ENCODE measurements at regions of chr1 and their contacts with region 1.

Region 1: GRCh38 chr1:165367375-165367993 is 11.0 kb upstream of the LMX1A start:
- DNase-seq: peak; percentile 81
- H3K4me3 Mint-ChIP-seq: no peak overlapping the region
- H3K27ac Mint-ChIP-seq: no peak overlapping the region
- H3K4me1 Mint-ChIP-seq: no peaks in the 10 kb centered on the region
- H3K27me3 Mint-ChIP-seq: peaks cover 54% of the 10 kb centered on the region

Region 2: DNA sequence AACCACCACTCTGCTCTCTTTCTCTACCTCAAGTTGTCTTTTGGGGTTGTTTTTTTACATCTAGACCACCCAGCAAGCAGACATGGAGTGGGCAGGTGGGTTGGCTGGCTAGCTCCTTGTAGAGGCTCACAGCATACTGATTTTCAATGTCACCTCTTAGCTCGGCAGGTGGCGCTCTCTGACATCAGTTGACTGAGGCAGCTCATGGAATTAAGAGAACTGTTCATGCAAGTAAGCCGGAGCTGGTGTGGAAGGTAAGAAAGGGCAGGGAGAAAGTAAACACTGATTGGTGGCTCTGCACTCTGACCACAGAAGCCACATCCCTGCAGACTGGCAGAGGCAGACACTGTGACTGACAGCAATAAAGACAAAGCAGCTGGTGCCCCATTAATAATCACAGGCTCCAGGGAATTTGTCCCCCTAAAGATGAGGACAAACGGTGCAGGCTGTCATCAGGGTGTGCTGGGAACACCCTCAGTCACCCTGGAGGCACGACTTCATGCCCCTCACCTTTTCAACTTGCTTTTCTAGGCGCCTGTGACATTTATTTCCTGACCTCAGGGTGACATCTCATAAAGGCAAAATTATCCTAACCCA is 237.8 kb before region 1 on chr1:
- CTCF ChIA-PET with region 1: interaction called, 4 read pairs
- POLR2A ChIA-PET with region 1: no interaction called
- intact Hi-C with region 1: loop called (anchors 5 kb)
- DNase-seq: peak; percentile 53
- H3K4me3 Mint-ChIP-seq: no peak overlapping the region
- H3K27ac Mint-ChIP-seq: no peak overlapping the region
- H3K4me1 Mint-ChIP-seq: no peaks in the 10 kb centered on the region
- H3K27me3 Mint-ChIP-seq: peaks cover under 1% of the 10 kb centered on the region

Region 3: GRCh38 chr1:165257969-165258459 is 109.5 kb before region 1 on chr1:
- CTCF ChIA-PET with region 1: interaction called, 22 read pairs
- POLR2A ChIA-PET with region 1: no interaction called
- intact Hi-C with region 1: loop called (anchors 10 kb)
- DNase-seq: peak; percentile 53
- H3K4me3 Mint-ChIP-seq: no peak overlapping the region
- H3K27ac Mint-ChIP-seq: no peak overlapping the region
- H3K4me1 Mint-ChIP-seq: no peaks in the 10 kb centered on the region
- H3K27me3 Mint-ChIP-seq: peaks cover 5% of the 10 kb centered on the region

Region 4: GRCh38 chr1:165350840-165351239 is 16.6 kb before region 1 on chr1:
- CTCF ChIA-PET with region 1: interaction called, 57 read pairs
- POLR2A ChIA-PET with region 1: no interaction called
- intact Hi-C with region 1: no loop called
- DNase-seq: no peak
- H3K4me3 Mint-ChIP-seq: no peak overlapping the region
- H3K27ac Mint-ChIP-seq: no peak overlapping the region
- H3K4me1 Mint-ChIP-seq: peaks cover 10% of the 10 kb centered on the region
- H3K27me3 Mint-ChIP-seq: peaks cover 66% of the 10 kb centered on the region

Region 5: GRCh38 chr1:165383067-165383466 is 15.6 kb after region 1 on chr1:
- CTCF ChIA-PET with region 1: interaction called, 56 read pairs
- POLR2A ChIA-PET with region 1: interaction called, 3 read pairs
- intact Hi-C with region 1: no loop called
- DNase-seq: no peak
- H3K4me3 Mint-ChIP-seq: no peak overlapping the region
- H3K27ac Mint-ChIP-seq: no peak overlapping the region
- H3K4me1 Mint-ChIP-seq: no peaks in the 10 kb centered on the region
- H3K27me3 Mint-ChIP-seq: peaks cover 21% of the 10 kb centered on the region

Region 6: GRCh38 chr1:165512812-165513211 is 145.3 kb after region 1 on chr1:
- CTCF ChIA-PET with region 1: no interaction called
- POLR2A ChIA-PET with region 1: no interaction called
- intact Hi-C with region 1: no loop called
- DNase-seq: no peak
- H3K4me3 Mint-ChIP-seq: no peak overlapping the region
- H3K27ac Mint-ChIP-seq: no peak overlapping the region
- H3K4me1 Mint-ChIP-seq: no peaks in the 10 kb centered on the region
- H3K27me3 Mint-ChIP-seq: peaks cover 8% of the 10 kb centered on the region

Region 7: GRCh38 chr1:165586435-165586834 is 219.0 kb after region 1 on chr1:
- CTCF ChIA-PET with region 1: interaction called, 42 read pairs
- POLR2A ChIA-PET with region 1: no interaction called
- intact Hi-C with region 1: no loop called
- DNase-seq: no peak
- H3K4me3 Mint-ChIP-seq: no peak overlapping the region
- H3K27ac Mint-ChIP-seq: no peak overlapping the region
- H3K4me1 Mint-ChIP-seq: no peaks in the 10 kb centered on the region
- H3K27me3 Mint-ChIP-seq: peaks cover 15% of the 10 kb centered on the region